ENCODE measurements at regions of chr11 and their contacts with region 1.

Region 1: DNA sequence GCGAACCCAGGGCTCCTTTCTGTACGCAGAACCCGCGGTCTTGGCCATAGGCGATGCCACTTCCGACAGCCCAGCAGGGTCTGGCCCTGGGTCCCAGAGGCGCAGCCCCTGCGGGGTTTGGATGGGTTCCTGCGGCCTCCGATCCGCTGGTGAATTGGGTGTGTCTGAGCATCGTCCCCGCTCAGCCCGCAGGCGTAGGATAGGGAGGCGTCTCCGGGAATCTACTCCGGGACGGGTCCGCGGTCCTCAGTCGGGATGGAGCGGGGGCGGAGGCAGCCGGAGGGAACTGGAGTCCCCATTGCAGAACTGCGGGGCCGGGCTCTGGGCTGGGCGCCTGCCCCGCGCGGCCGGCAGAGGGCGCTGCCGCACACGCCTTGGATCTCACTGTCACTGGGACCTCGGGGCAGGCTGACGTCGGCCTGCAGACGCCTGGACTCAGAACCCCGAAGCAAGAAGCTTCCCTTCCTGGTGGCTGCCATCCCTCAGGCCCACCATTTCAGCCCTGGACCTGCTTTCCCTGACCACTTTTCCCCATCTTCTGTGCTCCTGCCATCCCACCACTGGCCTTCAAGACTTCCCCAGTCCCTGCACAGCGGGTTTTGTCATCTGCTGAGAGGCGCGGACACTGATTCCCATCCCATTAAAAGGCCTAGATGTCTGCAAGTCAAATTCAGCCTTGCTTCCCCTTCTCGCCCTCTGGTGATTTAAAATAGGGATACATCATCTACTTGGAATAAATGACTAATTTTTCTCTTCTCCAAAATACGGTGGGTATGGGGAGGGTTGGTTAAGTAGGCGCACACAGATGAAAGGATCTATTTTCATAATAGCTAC is 38.3 kb upstream of the CREB3L1 start:
- DNase-seq: no peak
- H3K4me3 ChIP-seq: peak overlapping the region; percentile 53
- CTCF ChIP-seq: peak; percentile 90

Region 2: DNA sequence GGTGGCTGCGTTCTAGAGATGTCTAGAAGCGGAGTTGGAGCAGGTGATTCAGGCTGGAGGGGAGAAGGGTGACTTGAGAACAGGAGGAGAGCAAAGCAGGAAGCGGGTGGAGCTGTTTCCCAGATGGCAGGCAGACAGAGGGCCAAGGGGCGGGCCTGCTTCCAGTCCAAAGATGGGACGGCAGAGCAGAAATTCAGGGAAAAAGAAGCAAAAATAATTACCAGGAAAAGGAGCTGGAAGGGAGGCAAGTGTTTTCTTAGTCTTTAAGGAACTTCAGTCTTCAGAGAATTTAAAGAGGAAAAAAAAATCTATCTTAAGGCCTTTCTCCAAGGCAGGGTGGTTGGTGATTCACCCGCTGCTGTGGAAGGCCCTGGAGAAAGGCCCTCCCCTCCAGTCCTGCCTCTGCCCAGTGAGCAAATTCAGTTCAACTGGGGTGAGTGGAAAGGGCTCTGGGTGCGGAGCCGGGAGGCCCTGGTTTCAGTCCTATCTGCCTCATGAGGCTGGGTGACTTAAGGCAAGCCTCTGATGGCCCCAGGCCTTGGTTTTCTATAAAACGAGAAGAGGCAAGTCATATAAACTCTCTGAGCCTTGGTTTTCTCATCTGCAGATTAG is 33.7 kb after region 1 on chr11:
- CTCF ChIA-PET with region 1: interaction called, 72 read pairs
- POLR2A ChIA-PET with region 1: interaction called, 40 read pairs
- DNase-seq: no peak
- H3K4me3 ChIP-seq: no peak overlapping the region
- CTCF ChIP-seq: no peak

Region 3: GRCh38 chr11:46295312-46296058 is 56.3 kb after region 1 on chr11:
- CTCF ChIA-PET with region 1: interaction called, 167 read pairs
- POLR2A ChIA-PET with region 1: interaction called, 28 read pairs
- DNase-seq: no peak
- H3K4me3 ChIP-seq: peak overlapping the region; percentile 59
- CTCF ChIP-seq: no peak

Region 4: GRCh38 chr11:46332568-46333393 is 93.6 kb after region 1 on chr11:
- CTCF ChIA-PET with region 1: interaction called, 45 read pairs
- POLR2A ChIA-PET with region 1: interaction called, 5 read pairs
- DNase-seq: no peak
- H3K4me3 ChIP-seq: peak overlapping the region; percentile 38
- CTCF ChIP-seq: no peak

Region 5: GRCh38 chr11:46361283-46362155 is 122.3 kb after region 1 on chr11:
- CTCF ChIA-PET with region 1: interaction called, 36 read pairs
- POLR2A ChIA-PET with region 1: no interaction called
- DNase-seq: no peak
- H3K4me3 ChIP-seq: peak overlapping the region; percentile 37
- CTCF ChIP-seq: no peak

Region 6: GRCh38 chr11:46693597-46694012 is 454.4 kb after region 1 on chr11:
- CTCF ChIA-PET with region 1: no interaction called
- POLR2A ChIA-PET with region 1: no interaction called
- DNase-seq: peak; percentile 67
- H3K4me3 ChIP-seq: no peak overlapping the region
- CTCF ChIP-seq: no peak

Measured in AG04449 (cell line).